Endothelial cell of umbilical vein (primary cell): ENCODE measurements at regions of chr10 and their contacts with region 1.

Region 1: GRCh38 chr10:131900350-131901146 is at the start of gene PPP2R2D:
- DNase-seq: peak; percentile 90
- H3K4me3 ChIP-seq: peak within 1 kb of the TSS; percentile 87 to 95 (median 93)
- H3K27ac ChIP-seq: peak within 1 kb of the TSS; percentile 72
- H3K4me1 ChIP-seq: peaks cover 23% of the 10 kb centered on the region
- H3K27me3 ChIP-seq: peaks cover 12 to 18% of the 10 kb centered on the region in 2 experiments
- CTCF ChIP-seq: no peak
- POLR2A ChIP-seq: peak; percentile 45
- total RNA-seq, gene PPP2R2D: 33.9 and 36.3 TPM in 2 replicates

Region 2: GRCh38 chr10:131841131-131841660 is 59.4 kb before region 1 on chr10:
- CTCF ChIA-PET with region 1: no interaction called
- POLR2A ChIA-PET with region 1: no interaction called
- dilution Hi-C with region 1: no loop called
- intact Hi-C with region 1: no loop called
- DNase-seq: no peak
- H3K4me3 ChIP-seq: no peak overlapping the region
- H3K27ac ChIP-seq: no peak overlapping the region
- H3K4me1 ChIP-seq: no peaks in the 10 kb centered on the region
- H3K27me3 ChIP-seq: no peaks in the 10 kb centered on the region
- CTCF ChIP-seq: no peak
- POLR2A ChIP-seq: no peak

Region 3: DNA sequence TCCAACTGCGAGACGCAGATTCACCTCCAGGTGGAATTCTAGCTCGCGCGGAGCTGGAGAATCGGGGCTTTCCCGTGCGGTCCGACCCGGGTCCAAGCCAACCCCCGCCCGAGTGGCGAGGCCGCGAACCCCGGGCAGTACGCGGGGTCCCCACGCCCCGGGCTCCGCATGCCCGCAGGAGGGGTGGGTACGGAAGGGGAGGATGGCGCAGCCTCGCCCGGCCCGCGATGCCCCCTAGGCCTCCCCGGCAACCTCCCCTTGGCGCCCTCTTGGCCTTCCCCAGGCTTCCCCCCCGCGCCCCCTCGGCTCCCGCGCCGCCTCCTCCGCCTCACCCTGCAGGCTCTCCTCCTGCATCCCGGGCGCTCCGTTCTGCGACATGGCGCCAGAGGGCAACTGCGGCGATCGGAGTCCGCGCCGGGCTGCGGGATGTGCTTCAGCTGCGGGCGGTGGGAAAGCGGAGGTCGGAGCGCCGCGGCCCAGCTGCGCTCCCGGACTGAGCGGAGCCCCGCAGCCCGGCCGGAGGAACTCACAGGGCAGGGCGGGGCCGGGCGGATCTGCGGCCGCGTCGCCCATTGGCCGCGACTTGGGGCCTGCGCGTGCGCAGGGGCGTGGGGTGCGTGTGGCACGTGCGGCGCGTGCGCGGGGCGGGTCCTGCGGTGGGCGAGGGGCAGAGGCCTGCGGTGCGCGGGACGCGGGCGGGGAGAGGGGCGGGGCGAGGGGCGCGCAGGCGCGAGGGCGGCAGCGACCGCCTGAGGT is 81.1 kb after region 1 on chr10 and contains the start of gene BNIP3:
- CTCF ChIA-PET with region 1: interaction called, 4 read pairs
- POLR2A ChIA-PET with region 1: interaction called, 3 read pairs
- dilution Hi-C with region 1: no loop called
- intact Hi-C with region 1: loop called (anchors 1 kb)
- DNase-seq: peak; percentile 97
- H3K4me3 ChIP-seq: peak within 1 kb of the TSS; percentile 88 to 98 (median 94)
- H3K27ac ChIP-seq: peak within 1 kb of the TSS; percentile 30
- H3K4me1 ChIP-seq: peaks cover 24% of the 10 kb centered on the region
- H3K27me3 ChIP-seq: no peaks in the 10 kb centered on the region
- CTCF ChIP-seq: peak in 1 of 2 donors; percentile 4
- POLR2A ChIP-seq: peak; percentile 81
- total RNA-seq, gene BNIP3: 40.1 and 51.4 TPM in 2 replicates